Posterior cingulate gyrus (tissue), 11 donors: ENCODE measurements at regions of chr10 and their contacts with region 1.

Region 1: DNA sequence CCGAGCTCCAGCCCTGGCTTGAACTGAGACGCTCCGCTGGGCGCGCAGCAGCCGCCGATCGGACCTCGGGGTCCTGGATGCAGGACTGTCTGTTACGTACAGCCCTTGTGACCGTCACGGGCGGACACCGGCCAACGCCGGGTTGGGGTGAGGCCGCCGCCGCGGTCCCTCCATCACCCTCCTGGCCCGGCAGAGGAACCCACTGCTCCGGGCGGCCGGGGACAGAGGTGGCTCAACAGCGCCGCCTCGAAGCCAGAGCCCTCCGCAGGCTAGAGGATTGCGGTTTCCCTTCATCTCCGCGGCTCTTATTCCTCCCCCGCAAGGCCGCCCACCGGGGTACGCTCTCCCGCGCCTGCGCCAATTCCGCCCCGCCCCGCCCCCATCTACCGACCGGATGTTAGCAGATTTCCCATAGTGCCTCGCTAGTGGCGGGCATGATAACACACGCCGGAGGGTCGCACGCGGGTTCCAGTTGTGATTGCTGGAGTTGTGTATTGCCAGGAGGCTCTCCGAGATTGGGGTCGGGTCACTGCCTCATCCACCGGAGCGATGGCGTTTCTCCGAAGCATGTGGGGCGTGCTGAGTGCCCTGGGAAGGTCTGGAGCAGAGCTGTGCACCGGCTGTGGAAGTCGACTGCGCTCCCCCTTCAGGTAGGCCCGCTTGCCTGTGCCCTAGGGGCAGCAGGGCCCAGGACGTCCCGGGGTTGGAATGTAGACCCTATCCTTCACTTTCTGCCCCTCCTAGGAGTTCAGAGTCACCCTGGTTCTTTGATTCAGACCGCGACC is at the start of gene TFAM:
- DNase-seq: peak; percentile 88 to 98 (median 94)

Region 2: GRCh38 chr10:58177362-58177947 is 207.7 kb before region 1 on chr10:
- intact Hi-C with region 1: loop called (anchors 2 kb)
- DNase-seq: no peak

Region 3: DNA sequence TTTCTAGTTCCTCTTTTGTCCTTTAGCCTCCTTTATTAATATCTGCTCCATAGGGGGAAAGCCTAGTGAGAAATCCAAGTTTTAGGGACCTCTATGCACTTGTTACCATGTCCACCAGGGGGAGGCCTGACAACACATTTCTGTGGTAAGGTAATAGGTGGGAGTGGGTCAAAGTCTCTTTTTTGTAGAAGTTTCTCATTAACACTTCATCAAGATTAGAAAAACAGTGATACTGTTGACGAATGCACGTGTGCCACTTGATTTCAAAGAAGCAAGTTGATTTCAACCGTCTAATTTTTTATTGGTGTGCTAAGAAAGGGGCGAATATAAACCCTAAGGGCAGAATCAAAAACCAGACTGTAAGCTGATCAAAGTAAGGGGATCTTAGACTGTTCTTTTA is 85.6 kb before region 1 on chr10:
- intact Hi-C with region 1: loop called (anchors 2 kb)
- DNase-seq: peak in 5 of 10 donors; percentile 23 to 56 (median 50)

Region 4: DNA sequence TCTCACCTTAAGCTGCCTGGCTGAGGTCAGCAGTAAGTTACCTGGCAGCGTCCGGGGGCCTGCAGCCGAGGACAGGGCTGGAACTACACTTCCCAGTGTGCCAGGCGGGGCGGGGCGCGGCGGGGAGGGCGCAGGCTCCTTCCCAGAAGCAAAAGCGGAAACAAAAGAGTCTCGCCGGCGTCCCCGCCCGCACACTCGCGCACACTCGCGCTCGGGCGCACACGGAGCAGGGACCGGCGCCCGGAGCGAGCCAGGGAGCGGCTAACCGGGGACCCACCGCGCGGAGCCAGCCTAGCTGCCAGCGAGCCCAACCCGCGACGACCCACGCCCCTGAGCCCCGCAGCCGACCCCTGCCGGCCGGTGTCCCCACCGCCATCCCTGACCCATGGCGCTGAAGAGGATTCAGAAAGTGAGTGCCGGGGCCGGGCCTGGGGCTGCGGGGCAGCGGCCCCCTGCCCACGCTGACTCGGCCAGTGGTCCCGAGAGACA is 50.3 kb before region 1 on chr10 and contains the start of gene UBE2D1:
- intact Hi-C with region 1: loop called (anchors 1 kb)
- DNase-seq: peak; percentile 85 to 98 (median 92)